Activated CD4-positive, alpha-beta memory T cell treated with anti-CD3 and anti-CD28 coated beads for 36 hours (primary cell): ENCODE measurements at regions of chr4 and their contacts with region 1.

Region 1: GRCh38 chr4:52712172-52712990 is 38.8 kb downstream of the ERVMER34-1 start:
- DNase-seq: peak; percentile 98
- H3K4me3 Mint-ChIP-seq: peak overlapping the region; percentile 95
- H3K27ac Mint-ChIP-seq: peak overlapping the region; percentile 97
- H3K4me1 Mint-ChIP-seq: peaks cover 48% of the 10 kb centered on the region
- H3K27me3 Mint-ChIP-seq: no peaks in the 10 kb centered on the region

Region 2: GRCh38 chr4:52545099-52546069 is 167.0 kb before region 1 on chr4:
- CTCF ChIA-PET with region 1: interaction called, 19 read pairs
- POLR2A ChIA-PET with region 1: interaction called, 5 read pairs
- intact Hi-C with region 1: loop called (anchors 5 kb)
- DNase-seq: peak; percentile 75
- H3K4me3 Mint-ChIP-seq: no peak overlapping the region
- H3K27ac Mint-ChIP-seq: no peak overlapping the region
- H3K4me1 Mint-ChIP-seq: no peaks in the 10 kb centered on the region
- H3K27me3 Mint-ChIP-seq: peaks cover 4% of the 10 kb centered on the region

Region 3: GRCh38 chr4:52643785-52644244 is 68.6 kb before region 1 on chr4:
- CTCF ChIA-PET with region 1: no interaction called
- POLR2A ChIA-PET with region 1: interaction called, 3 read pairs
- intact Hi-C with region 1: loop called (anchors 1 kb)
- DNase-seq: no peak
- H3K4me3 Mint-ChIP-seq: no peak overlapping the region
- H3K27ac Mint-ChIP-seq: no peak overlapping the region
- H3K4me1 Mint-ChIP-seq: peaks cover 57% of the 10 kb centered on the region
- H3K27me3 Mint-ChIP-seq: no peaks in the 10 kb centered on the region

Region 4: GRCh38 chr4:52824603-52825459 is 112.5 kb after region 1 on chr4:
- CTCF ChIA-PET with region 1: no interaction called
- POLR2A ChIA-PET with region 1: interaction called, 13 read pairs
- intact Hi-C with region 1: no loop called
- DNase-seq: no peak
- H3K4me3 Mint-ChIP-seq: no peak overlapping the region
- H3K27ac Mint-ChIP-seq: peak overlapping the region; percentile 14
- H3K4me1 Mint-ChIP-seq: peaks cover 39% of the 10 kb centered on the region
- H3K27me3 Mint-ChIP-seq: no peaks in the 10 kb centered on the region

Region 5: DNA sequence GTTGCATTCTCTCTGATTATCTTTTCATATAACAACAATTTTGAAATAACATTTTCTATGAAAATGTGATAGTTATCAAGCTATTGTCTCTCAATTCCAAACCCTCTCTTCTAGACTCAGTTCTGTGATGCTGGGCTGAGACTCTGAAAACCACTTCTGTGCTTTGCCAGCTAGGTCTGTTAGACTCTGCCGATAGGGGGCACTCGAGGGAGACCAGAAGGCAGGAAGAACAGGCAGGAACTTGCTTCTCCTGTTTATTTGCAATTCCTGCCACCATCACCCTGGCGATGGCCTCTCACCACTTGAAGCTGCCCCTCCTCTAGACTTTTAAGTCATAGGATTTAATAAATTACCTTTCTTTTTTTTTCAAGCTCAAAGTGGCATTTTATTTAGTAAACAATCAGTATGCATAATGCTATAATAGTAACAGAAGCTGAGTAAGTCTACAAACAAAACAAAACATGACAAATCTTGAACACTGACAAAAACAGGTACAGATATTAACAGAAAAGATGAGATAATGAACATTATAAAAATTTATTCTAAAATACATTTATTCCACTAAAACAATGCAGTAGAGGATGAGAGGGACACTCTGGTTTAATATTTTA is 199.4 kb after region 1 on chr4:
- CTCF ChIA-PET with region 1: interaction called, 3 read pairs
- POLR2A ChIA-PET with region 1: no interaction called
- intact Hi-C with region 1: loop called (anchors 5 kb)
- DNase-seq: peak; percentile 82
- H3K4me3 Mint-ChIP-seq: no peak overlapping the region
- H3K27ac Mint-ChIP-seq: no peak overlapping the region
- H3K4me1 Mint-ChIP-seq: no peaks in the 10 kb centered on the region
- H3K27me3 Mint-ChIP-seq: no peaks in the 10 kb centered on the region

Region 6: DNA sequence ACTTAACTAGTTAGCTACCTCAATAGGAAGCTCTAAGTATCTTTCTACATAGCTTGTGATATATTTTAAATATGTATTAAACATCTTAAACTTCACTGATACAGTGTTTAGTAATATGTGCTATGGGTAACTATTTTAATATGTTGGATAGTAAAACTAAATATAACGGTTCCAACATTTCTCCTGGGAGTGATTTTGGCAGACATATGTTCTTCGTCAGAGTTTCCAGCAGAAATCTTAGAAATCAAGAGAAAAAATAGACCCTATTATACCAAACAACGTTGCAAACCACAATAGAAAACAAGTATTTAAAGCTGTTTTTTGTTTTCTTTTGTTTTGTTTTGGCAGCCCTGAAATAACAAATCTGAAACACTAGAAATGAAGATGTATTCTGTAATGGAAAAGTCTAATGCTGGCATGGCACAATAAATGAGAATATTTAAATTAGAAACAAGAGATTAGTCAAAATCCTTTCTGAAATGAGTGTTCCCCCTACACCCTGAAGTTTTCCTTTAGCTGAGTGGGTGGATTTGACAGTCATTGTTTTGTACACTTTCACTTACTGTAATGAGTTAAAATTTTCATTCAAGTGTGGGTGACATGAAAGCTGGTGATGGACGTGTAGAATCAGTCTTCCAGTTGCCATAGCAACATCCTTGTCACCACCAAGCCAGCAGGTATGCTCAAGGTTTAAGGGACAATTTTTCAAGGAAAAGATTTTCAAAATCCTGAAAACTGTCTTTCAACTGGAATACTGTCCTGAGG is 419.9 kb after region 1 on chr4:
- CTCF ChIA-PET with region 1: no interaction called
- POLR2A ChIA-PET with region 1: no interaction called
- intact Hi-C with region 1: loop called (anchors 2 kb)
- DNase-seq: peak; percentile 26
- H3K4me3 Mint-ChIP-seq: no peak overlapping the region
- H3K27ac Mint-ChIP-seq: peak overlapping the region; percentile 38
- H3K4me1 Mint-ChIP-seq: peaks cover 27% of the 10 kb centered on the region
- H3K27me3 Mint-ChIP-seq: no peaks in the 10 kb centered on the region

Region 7: GRCh38 chr4:54064295-54065111 is 1352.1 kb after region 1 on chr4 and contains the start of gene CHIC2:
- CTCF ChIA-PET with region 1: no interaction called
- POLR2A ChIA-PET with region 1: no interaction called
- intact Hi-C with region 1: loop called (anchors 5 kb)
- DNase-seq: peak; percentile 97
- H3K4me3 Mint-ChIP-seq: peak within 1 kb of the TSS; percentile 92
- H3K27ac Mint-ChIP-seq: peak within 1 kb of the TSS; percentile 95
- H3K4me1 Mint-ChIP-seq: peaks cover 38% of the 10 kb centered on the region
- H3K27me3 Mint-ChIP-seq: no peaks in the 10 kb centered on the region
- total RNA-seq, gene CHIC2: 11.2 to 11.8 TPM